ENCODE measurements at regions of chr16 and their contacts with region 1.

Region 1: GRCh38 chr16:10509534-10510025 is 70.8 kb downstream of the EMP2 start:
- DNase-seq: peak; percentile 49
- H3K4me3 Mint-ChIP-seq: no peak overlapping the region
- H3K27ac Mint-ChIP-seq: no peak overlapping the region
- H3K4me1 Mint-ChIP-seq: peaks cover 2% of the 10 kb centered on the region
- H3K27me3 Mint-ChIP-seq: peaks cover 2% of the 10 kb centered on the region

Region 2: DNA sequence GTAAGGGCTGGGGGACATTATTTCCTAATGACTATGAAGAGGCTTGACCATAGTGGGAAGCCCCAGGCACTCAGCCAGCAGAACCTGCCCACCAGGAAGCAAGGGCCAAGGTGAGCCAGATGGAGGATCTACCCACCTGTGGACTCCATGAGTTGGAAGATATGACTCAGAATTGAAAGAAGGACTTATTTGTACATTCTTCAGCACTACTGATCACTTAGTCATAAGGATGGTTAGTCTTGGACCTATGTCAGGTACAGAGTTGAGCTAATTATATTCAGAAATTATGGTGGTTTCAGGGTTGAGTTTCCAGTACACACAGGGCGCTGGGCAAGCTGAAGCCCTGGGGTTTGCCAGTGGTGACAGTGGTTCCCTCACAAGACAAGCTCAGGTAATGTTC is 303.4 kb before region 1 on chr16:
- intact Hi-C with region 1: no loop called
- DNase-seq: no peak
- H3K4me3 Mint-ChIP-seq: no peak overlapping the region
- H3K27ac Mint-ChIP-seq: no peak overlapping the region
- H3K4me1 Mint-ChIP-seq: no peaks in the 10 kb centered on the region
- H3K27me3 Mint-ChIP-seq: no peaks in the 10 kb centered on the region

Region 3: DNA sequence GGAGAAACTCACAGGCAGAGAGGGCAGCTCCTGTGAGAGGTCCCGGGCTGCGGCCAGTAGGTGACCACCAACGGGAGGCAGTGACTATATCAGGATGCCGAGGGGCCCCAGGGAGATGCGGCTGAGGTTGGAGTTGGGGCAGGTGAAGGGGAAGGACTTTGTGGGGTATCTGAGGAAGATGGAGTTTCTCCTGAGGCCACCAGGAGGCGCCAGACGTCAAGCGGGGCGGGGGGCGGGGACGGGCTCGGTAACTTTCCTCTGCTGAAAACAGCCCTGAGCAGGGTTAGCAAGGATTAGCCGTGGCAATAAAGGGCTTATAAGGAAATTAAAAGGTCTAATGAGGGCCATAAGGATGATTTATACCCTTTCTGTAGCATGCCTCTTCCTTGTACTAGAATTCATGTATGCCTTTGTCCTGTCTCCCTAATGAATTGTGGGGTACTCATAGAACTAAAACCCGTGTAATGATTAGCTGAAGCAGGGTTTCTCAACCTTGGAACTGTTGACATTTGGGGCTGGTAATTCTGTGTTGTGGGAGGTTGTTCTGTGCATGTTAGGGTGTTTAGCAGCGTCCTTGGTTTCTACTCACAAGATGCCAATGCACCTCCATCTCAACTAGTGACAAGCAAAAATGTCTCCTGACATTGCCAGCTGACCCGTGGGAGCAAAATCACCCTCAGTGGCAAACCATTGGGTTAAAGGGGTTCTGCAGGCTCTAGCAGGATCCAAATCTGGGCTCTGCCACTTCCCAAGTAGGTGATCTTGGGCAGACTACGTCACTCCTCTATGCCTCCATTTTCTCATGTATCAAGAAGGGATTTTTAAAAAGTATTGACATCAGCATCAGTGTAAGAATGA is 252.6 kb before region 1 on chr16:
- intact Hi-C with region 1: loop called (anchors 1 kb)
- DNase-seq: peak; percentile 12
- H3K4me3 Mint-ChIP-seq: no peak overlapping the region
- H3K27ac Mint-ChIP-seq: no peak overlapping the region
- H3K4me1 Mint-ChIP-seq: peaks cover 6% of the 10 kb centered on the region
- H3K27me3 Mint-ChIP-seq: peaks cover 3% of the 10 kb centered on the region

Region 4: DNA sequence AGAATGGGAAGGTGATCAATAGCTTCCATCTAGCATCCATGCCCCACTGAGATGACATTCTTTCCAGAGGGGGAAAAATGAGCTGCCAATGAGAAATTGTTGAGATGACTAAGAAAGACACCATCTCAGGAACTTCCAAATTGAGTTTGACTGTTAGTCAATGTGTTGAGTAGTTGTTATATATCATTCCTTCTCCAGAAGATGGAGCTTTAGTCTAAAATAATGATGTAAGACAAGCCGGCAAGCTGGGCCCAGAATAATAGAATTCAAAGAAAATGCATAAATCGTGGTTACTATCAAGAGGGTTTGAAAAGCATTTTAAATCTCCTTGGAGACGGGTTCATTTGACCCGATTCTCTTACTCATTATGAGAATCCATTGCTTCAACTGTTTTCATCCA is 194.8 kb before region 1 on chr16:
- intact Hi-C with region 1: loop called (anchors 1 kb)
- DNase-seq: no peak
- H3K4me3 Mint-ChIP-seq: no peak overlapping the region
- H3K27ac Mint-ChIP-seq: no peak overlapping the region
- H3K4me1 Mint-ChIP-seq: peaks cover 6% of the 10 kb centered on the region
- H3K27me3 Mint-ChIP-seq: no peaks in the 10 kb centered on the region

Region 5: GRCh38 chr16:10322723-10323527 is 186.7 kb before region 1 on chr16:
- intact Hi-C with region 1: loop called (anchors 2 kb)
- DNase-seq: no peak
- H3K4me3 Mint-ChIP-seq: no peak overlapping the region
- H3K27ac Mint-ChIP-seq: no peak overlapping the region
- H3K4me1 Mint-ChIP-seq: peaks cover 5% of the 10 kb centered on the region
- H3K27me3 Mint-ChIP-seq: no peaks in the 10 kb centered on the region

Region 6: GRCh38 chr16:10575506-10576130 is 66.0 kb after region 1 on chr16:
- intact Hi-C with region 1: no loop called
- DNase-seq: no peak
- H3K4me3 Mint-ChIP-seq: no peak overlapping the region
- H3K27ac Mint-ChIP-seq: no peak overlapping the region
- H3K4me1 Mint-ChIP-seq: no peaks in the 10 kb centered on the region
- H3K27me3 Mint-ChIP-seq: peaks cover 18% of the 10 kb centered on the region

Region 7: GRCh38 chr16:10737068-10737625 is 227.6 kb after region 1 on chr16:
- intact Hi-C with region 1: loop called (anchors 1 kb)
- DNase-seq: peak; percentile 64
- H3K4me3 Mint-ChIP-seq: no peak overlapping the region
- H3K27ac Mint-ChIP-seq: peak overlapping the region; percentile 38
- H3K4me1 Mint-ChIP-seq: peaks cover 34% of the 10 kb centered on the region
- H3K27me3 Mint-ChIP-seq: peaks cover 2% of the 10 kb centered on the region

Measured in activated T-helper 2 cell treated with anti-CD3 and anti-CD28 coated beads, Interferon-gamma antibody, Interleukin-2, Interleukin-4, amounts not matched to agents 10 μg/mL and 5 μg/mL and 100 μg/mL, durations not matched to agents 14 hours and 24 hours and 36 hours (primary cell).